ENCODE measurements at regions of chr6 and their contacts with region 1.

Region 1: DNA sequence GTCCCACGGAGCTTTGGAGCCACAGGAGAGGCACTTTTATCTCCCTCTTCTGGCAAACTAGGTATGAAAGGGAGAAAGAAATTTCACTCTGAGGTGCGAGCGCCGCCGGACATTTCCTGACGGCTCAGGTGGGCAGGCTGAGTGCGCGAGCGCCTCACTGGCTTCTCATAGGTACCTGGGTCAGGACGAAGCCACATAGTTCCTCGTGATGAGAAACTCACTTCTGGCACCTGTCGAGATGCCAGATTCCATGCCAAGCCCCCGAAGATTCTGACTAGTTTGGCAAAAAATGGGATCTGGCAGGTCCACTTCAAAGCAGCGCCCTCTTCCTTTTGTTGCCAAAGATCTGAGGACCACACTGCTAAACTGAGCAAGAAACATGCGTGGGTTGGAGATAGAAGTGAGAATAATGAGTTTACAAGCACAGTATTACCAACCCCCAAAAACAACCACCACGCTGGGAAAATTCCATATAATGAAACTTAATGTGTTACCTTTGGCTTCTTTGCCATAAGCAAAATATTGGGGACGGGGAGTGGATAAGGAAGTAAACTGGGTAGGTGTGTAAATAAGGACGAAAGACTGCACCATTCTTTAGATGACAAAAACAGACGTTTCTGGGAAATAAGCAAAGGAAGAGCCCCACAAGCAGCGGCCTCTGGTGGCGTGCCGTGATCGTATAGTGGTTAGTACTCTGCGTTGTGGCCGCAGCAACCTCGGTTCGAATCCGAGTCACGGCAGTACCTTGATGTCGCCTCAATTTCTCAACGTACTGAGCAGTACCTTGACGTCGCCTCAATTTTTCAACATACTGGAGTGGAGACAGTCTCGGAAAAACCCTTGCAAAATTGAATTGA is 89.8 kb upstream of the PRSS16 start:
- DNase-seq: peak; percentile 92
- ATAC-seq: peak; percentile 80
- H3K4me3 Mint-ChIP-seq: peak overlapping the region; percentile 76
- H3K27ac Mint-ChIP-seq: peak overlapping the region; percentile 77
- H3K4me1 Mint-ChIP-seq: peaks cover 47% of the 10 kb centered on the region
- H3K27me3 Mint-ChIP-seq: no peaks in the 10 kb centered on the region
- CTCF ChIP-seq: peak; percentile 36

Region 2: DNA sequence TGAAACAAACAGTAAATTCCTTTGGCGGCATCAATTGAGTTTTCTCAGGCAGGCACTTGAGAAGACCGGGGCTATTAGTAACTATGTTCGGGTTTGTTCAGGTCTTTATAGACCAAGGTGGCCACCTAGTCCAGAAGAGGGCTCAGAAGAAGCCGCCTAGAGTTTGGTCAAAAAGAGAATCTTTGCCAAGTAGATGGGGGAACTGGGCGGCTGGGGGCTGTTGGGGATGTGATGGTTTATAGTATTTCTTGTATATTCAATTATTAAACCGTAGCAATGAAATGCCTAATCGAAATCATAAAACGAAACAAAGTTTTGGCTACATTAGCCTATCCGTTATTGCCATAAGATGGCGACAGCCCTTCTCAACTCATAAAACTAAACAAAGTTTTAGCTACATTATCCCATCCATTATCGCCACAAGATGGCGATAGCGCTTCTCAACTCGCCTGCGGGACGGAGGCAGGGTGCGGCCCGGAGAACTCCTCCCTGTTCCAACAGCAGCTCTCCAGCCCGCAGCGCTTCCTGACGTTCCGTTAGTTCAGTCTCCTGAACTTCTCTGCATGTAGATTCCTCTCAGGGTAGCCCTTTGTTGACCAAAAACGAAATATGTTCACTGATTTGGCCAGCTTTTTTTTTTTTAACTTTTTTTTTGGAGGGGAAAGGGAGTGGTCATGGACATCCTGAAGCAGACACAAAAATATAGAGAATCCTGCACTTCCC is 30.7 kb before region 1 on chr6:
- CTCF ChIA-PET with region 1: interaction called, 13 read pairs
- POLR2A ChIA-PET with region 1: interaction called, 692 read pairs
- intact Hi-C with region 1: no loop called
- DNase-seq: peak; percentile 91
- ATAC-seq: peak; percentile 75
- H3K4me3 Mint-ChIP-seq: peak overlapping the region; percentile 74
- H3K27ac Mint-ChIP-seq: peak overlapping the region; percentile 79
- H3K4me1 Mint-ChIP-seq: peaks cover 20% of the 10 kb centered on the region
- H3K27me3 Mint-ChIP-seq: no peaks in the 10 kb centered on the region
- CTCF ChIP-seq: peak; percentile 78

Measured in activated CD8-positive, alpha-beta T cell treated with anti-CD3 and anti-CD28 coated beads for 36 hours (primary cell).